HepG2 (cell line): ENCODE measurements at regions of chr9 and their contacts with region 1.

Region 1: DNA sequence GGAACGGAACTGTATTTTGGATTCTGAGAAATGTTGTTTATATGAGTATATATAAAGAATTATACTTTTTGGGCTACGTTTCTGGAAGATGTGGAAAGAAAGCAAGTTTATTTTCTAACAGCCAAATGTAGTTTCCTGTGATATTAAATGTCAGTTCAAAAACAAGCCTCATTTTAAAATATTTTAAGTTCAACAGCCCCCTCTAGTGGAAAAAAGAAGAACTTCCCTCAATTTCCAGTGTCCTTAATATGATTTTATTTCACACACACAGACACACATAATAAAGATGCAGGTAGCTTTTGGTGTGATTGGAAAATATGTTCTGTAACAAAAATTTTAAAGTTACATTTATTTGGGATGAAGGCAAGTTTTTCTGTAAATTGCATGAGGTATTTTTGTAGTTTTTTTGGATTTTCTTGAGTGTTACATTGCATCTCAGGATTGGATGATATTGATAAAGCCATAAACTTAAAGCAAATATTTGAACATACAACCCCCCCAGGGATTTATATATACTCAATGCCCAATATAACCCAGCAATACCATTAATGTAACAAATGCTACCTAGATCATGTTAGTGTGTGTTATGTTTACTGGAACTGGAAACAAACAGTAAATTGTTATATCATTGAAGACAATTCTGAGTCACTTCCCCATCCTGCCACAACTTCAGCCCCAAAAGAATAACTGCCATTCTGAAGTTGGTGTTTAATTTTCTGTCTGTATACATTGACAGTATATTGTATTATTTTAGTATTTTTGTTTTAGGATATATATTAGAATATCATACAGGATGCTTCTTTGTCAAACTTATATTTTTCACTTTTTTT is 54.0 kb downstream of the CCDC171 start:
- DNase-seq: peak; percentile 29
- ATAC-seq: no peak
- H3K4me3 ChIP-seq: no peak overlapping the region
- H3K27ac ChIP-seq: no peak overlapping the region
- H3K4me1 ChIP-seq: no peaks in the 10 kb centered on the region
- H3K27me3 ChIP-seq: no peaks in the 10 kb centered on the region
- CTCF ChIP-seq: peak; percentile 53
- EP300 ChIP-seq: no peak
- POLR2A ChIP-seq: no peak
- RAD21 ChIP-seq: no peak

Region 2: DNA sequence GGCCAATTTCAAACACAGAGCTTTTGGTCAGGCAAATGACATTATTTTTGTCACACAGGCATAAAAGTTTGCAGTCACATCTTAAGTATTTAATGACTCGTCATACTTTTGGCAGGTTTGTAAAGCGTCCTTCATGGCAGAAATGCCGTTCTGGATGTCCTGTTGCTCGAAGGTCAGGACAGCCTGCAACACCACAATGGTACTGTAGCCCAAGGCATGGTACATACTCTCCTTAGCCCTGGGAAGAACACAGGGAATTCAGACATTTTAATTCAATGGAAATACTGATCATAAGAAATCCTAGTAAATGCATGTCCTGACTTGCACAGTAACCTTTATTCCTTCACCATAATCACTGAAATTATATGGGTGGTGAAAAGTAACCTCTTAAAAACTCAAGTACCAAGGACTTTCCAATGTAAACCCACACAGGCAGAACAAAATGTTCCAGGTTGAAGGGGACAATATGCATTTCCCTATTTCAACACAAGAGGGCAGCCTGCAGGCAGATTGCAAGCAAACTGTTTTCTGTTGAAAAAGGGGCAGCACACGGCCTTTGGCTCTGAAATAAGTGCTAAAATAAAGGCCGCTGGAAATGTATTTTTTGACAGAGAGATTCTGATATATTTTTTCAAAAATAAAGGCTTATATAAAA is 395.6 kb before region 1 on chr9:
- CTCF ChIA-PET with region 1: interaction called, 8 read pairs
- POLR2A ChIA-PET with region 1: no interaction called
- in situ Hi-C with region 1: loop called (anchors 25 kb)
- intact Hi-C with region 1: loop called (anchors 5 kb)
- DNase-seq: peak; percentile 70
- ATAC-seq: peak; percentile 77
- H3K4me3 ChIP-seq: no peak overlapping the region
- H3K27ac ChIP-seq: peak overlapping the region; percentile 48
- H3K4me1 ChIP-seq: peaks cover 36% of the 10 kb centered on the region
- H3K27me3 ChIP-seq: no peaks in the 10 kb centered on the region
- CTCF ChIP-seq: peak; percentile 81
- EP300 ChIP-seq: no peak
- POLR2A ChIP-seq: no peak
- RAD21 ChIP-seq: peak; percentile 61

Region 3: DNA sequence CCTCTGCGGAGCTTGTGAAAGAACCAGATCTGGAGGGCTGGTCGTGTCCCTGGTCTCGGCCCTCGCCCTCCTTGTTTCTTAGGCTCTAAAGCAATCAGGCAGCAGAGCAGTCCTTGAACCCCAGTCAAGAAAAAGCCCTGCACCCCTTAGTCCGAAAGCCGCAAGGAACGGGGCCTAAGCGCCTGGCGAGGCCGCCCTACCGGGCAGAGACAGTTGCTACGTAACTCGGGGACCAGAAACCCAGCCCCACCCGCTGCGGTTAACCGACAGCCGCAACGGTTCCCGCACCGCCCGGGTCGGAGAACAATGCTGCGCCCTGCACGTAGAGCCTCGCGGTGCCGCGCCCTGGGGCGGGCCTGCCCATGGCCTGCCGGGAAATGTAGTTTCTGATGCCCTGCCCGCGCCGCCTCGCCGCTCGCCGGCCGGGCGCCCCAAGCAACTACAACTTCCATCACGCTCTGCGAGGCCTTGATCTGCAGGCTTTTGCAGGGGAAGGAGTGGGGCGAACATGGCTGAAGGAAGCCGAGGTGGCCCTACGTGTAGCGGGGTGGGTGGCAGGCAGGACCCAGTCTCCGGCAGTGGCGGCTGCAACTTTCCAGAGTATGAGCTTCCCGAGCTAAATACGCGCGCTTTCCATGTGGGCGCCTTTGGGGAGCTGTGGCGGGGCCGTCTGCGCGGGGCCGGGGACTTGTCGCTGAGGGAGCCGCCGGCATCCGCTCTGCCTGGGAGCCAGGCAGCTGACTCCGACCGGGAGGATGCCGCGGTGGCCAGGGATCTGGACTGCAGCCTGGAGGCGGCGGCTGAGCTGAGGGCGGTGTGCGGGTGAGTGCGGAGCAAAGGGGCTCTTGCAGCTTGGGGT is 184.3 kb before region 1 on chr9 and contains the start of gene SNAPC3:
- CTCF ChIA-PET with region 1: no interaction called
- POLR2A ChIA-PET with region 1: no interaction called
- in situ Hi-C with region 1: no loop called
- intact Hi-C with region 1: loop called (anchors 5 kb)
- DNase-seq: peak; percentile 88
- ATAC-seq: peak; percentile 98
- H3K4me3 ChIP-seq: peak within 1 kb of the TSS; percentile 77 to 94 (median 91)
- H3K27ac ChIP-seq: peak within 1 kb of the TSS; percentile 75
- H3K4me1 ChIP-seq: peaks cover 48% of the 10 kb centered on the region
- H3K27me3 ChIP-seq: no peaks in the 10 kb centered on the region; a peak in 1 of 5 replicates
- CTCF ChIP-seq: 0 out of 2 replicates have a peak, but pooled peaks have one; percentile 1
- EP300 ChIP-seq: no peak
- POLR2A ChIP-seq: peak; percentile 81 to 91
- RAD21 ChIP-seq: no peak; the same call in 1 of the 2 replicates
- total RNA-seq, gene SNAPC3: 25.5 and 25.6 TPM in 2 replicates

Region 4: DNA sequence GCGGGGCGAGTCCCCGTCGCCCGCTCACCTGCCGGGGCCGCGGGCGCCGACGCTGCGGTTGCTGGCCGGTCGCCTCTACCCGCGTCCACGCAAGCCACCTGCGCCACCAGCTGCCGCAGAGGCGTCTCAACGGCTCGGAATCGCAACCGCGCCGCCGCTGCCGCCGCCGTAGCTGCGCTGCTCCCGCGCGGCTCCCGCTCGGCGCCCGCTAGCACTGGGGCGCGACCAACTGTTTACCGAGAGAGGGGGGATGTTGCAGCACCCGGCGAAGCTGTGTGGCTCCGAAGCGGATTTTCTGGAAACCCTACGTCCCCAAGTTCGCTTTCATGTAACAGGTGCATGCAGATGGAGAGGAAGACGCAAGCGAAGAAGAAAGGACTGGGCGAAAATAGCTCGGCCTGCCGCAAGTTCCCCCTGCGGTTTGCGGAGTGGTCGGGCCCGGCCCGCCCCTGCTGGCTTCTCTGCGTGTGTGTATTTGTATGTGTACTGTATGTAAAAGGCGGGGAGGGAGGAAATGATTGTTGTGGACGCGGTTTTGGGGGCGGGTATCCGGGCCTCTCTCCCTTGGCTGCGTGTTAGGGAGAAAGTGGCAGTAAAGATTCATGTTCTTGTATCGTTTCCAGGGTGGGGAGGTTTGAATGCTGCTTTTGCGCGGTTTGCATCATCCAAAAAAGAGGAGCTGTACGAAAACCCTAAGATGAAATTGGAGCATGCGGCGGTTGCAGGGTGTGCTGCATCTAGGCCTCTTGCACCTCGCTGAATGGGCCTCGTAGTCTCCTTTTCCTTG is 95.9 kb before region 1 on chr9 and contains the start of gene PSIP1:
- CTCF ChIA-PET with region 1: no interaction called
- POLR2A ChIA-PET with region 1: no interaction called
- in situ Hi-C with region 1: no loop called
- intact Hi-C with region 1: loop called (anchors 10 kb)
- DNase-seq: peak; percentile 57
- ATAC-seq: peak; percentile 93
- H3K4me3 ChIP-seq: peak within 1 kb of the TSS; percentile 80 to 96 (median 92)
- H3K27ac ChIP-seq: peak within 1 kb of the TSS; percentile 94
- H3K4me1 ChIP-seq: peaks cover 30% of the 10 kb centered on the region
- H3K27me3 ChIP-seq: no peaks in the 10 kb centered on the region; a peak in 1 of 5 replicates
- CTCF ChIP-seq: no peak; the same call in 1 of the 2 replicates
- EP300 ChIP-seq: no peak
- POLR2A ChIP-seq: peak; percentile 76 to 89
- RAD21 ChIP-seq: peak; percentile 28; the same call in 1 of the 2 replicates
- total RNA-seq, gene PSIP1: 46.4 and 53.8 TPM in 2 replicates

Region 5: DNA sequence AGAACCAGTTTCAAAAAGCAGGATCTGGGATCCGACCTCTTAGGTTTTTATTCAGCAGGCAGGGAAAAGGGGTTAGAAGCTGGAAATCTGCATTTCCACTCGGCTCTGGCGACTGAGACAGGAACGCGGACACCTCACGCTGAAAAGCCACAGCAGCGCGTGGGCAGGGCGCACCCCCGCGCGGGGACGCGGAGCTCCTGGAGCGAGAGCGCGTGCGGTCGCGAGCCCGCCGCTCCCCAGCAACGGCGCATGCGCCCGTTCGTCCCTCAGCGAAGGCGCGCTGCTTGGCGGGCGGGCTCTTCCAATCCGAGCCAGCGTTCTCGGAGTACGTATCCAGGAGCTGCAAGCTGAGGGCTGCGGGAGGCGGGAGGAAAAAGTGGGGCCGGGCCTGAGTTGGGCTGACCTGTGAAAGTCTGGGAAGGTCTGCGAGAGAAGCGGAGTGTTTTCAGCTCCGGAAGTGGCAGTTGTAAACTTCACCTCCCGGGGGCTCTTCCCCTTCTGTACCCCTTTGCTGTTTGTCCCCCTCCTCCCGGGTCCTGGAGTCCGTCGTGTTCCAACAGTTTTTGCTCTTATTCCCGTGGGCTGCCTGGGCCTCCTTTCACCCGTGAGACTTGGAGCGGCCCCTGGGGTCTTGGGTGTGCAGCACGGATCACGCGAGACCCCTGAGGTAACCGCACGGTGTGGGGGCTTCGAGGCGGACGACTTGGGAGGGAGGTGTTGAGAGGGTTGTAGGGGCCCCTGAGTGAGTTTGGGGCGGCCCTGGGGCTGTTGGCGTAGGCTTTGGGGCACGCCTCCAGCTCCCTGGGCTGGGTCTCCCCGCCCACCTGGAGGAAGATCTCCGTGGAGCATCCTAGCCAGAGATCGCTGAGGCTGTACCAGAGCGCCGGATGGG is 54.0 kb before region 1 on chr9 and contains the start of gene CCDC171:
- CTCF ChIA-PET with region 1: no interaction called
- POLR2A ChIA-PET with region 1: interaction called, 3 read pairs
- in situ Hi-C with region 1: no loop called
- intact Hi-C with region 1: loop called (anchors 5 kb)
- DNase-seq: peak; percentile 90
- ATAC-seq: peak; percentile 99
- H3K4me3 ChIP-seq: peak within 1 kb of the TSS; percentile 66 to 80 (median 72)
- H3K27ac ChIP-seq: peak within 1 kb of the TSS; percentile 69
- H3K4me1 ChIP-seq: peaks cover 18% of the 10 kb centered on the region
- H3K27me3 ChIP-seq: peaks cover 0 to 3% of the 10 kb centered on the region in 2 experiments; a peak in 1 of 5 replicates
- CTCF ChIP-seq: no peak
- EP300 ChIP-seq: no peak
- POLR2A ChIP-seq: peak; percentile 62 to 89; a peak in 3 of 4 replicates
- RAD21 ChIP-seq: no peak
- total RNA-seq, gene CCDC171: 2.5 and 2.8 TPM in 2 replicates